ENCODE measurements at regions of chr14 and their contacts with region 1.

Region 1: GRCh38 chr14:61934385-61934784 is 172.2 kb downstream of the SNAPC1 start:
- DNase-seq: peak; percentile 31
- H3K4me3 Mint-ChIP-seq: no peak overlapping the region
- H3K27ac Mint-ChIP-seq: no peak overlapping the region
- H3K4me1 Mint-ChIP-seq: peaks cover 8% of the 10 kb centered on the region
- H3K27me3 Mint-ChIP-seq: peaks cover 27% of the 10 kb centered on the region

Region 2: DNA sequence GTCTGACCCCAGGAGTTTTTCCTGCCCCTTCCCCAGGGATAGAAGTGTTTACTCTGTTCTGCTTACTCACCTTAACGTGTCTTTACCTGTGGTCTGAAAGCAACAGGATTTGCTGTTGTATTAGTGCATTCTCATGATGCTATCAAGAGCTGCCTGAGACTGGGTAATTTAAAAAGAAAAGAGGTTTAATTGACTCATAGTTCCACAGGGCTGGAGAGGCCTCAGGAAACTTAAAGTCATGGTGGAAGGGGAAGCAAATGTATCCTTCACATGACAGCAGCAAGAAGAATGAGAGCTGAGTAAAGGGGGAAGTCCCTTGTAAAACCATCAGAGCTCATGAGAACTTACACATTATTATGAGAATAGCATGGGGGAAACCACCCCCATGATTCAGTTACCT is 68.3 kb after region 1 on chr14:
- CTCF ChIA-PET with region 1: no interaction called
- intact Hi-C with region 1: loop called (anchors 1 kb)
- DNase-seq: peak; percentile 47
- H3K4me3 Mint-ChIP-seq: no peak overlapping the region
- H3K27ac Mint-ChIP-seq: no peak overlapping the region
- H3K4me1 Mint-ChIP-seq: peaks cover 13% of the 10 kb centered on the region
- H3K27me3 Mint-ChIP-seq: peaks cover 17% of the 10 kb centered on the region

Region 3: DNA sequence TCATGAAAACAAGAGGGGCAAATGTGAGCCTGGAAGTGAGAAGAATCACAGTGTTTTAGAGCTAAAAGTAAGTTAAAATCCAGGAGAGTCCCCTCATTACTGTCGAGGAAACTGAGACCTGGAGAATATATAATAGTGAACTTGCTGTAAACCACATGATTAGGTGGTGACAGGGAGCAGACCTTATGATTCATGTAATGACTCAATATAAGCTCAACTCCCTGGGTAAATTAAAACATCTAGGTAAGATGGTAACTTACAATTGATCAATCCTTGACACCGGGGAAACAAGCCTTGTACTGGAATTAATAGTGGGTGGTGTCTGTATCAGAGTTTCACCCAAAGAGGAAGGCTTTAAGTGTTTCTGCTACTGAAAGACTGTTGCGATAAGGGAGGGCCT is 97.1 kb after region 1 on chr14:
- CTCF ChIA-PET with region 1: no interaction called
- intact Hi-C with region 1: loop called (anchors 1 kb)
- DNase-seq: no peak
- H3K4me3 Mint-ChIP-seq: no peak overlapping the region
- H3K27ac Mint-ChIP-seq: no peak overlapping the region
- H3K4me1 Mint-ChIP-seq: peaks cover 3% of the 10 kb centered on the region
- H3K27me3 Mint-ChIP-seq: peaks cover 20% of the 10 kb centered on the region

Region 4: GRCh38 chr14:62101673-62102348 is 167.4 kb after region 1 on chr14:
- CTCF ChIA-PET with region 1: no interaction called
- intact Hi-C with region 1: loop called (anchors 1 kb)
- DNase-seq: no peak
- H3K4me3 Mint-ChIP-seq: no peak overlapping the region
- H3K27ac Mint-ChIP-seq: no peak overlapping the region
- H3K4me1 Mint-ChIP-seq: no peaks in the 10 kb centered on the region
- H3K27me3 Mint-ChIP-seq: peaks cover 7% of the 10 kb centered on the region

Region 5: DNA sequence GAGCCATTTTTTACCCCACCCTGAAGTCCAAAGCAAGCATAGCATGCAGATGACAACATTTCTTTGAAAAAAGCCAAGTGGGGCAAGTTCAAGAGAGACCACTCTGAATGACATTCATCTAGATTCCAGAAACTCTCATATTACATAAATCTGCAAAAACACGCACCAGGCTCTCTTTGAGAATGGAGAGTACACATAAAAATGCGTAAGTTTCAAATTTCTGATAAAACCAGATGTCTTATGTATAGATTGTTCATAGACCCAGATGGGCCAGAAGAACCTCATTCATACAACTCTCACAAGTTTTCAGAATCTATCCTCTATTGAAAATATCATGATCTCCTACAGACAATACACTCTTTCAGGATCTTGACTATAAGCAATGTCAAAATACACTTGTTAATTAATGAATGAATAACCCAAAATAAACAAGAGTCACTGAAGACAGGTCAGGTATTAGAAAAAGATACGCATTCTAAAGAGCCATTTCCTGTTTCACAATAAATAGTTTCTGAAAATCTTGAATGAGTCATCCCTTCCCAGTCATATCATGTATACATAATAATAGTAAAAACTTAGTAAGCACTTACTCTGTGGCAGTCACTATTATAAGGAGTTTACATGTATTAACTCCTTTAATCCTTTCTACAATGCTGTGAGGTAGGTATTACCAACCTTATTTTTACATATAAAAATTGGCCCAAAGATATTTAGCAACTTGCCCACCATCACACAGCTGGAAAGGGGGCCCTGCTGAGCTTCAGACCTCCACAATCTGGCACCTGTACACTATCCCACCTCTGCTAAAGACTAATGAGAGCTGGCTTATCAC is 1536.8 kb after region 1 on chr14:
- CTCF ChIA-PET with region 1: no interaction called
- intact Hi-C with region 1: loop called (anchors 10 kb)
- DNase-seq: no peak
- H3K4me3 Mint-ChIP-seq: no peak overlapping the region
- H3K27ac Mint-ChIP-seq: no peak overlapping the region
- H3K4me1 Mint-ChIP-seq: peaks cover 60% of the 10 kb centered on the region
- H3K27me3 Mint-ChIP-seq: no peaks in the 10 kb centered on the region

Measured in activated naive CD4-positive, alpha-beta T cell treated with anti-CD3 and anti-CD28 coated beads for 36 hours (primary cell).